ENCODE measurements at regions of chr2 and their contacts with region 1.

Region 1: DNA sequence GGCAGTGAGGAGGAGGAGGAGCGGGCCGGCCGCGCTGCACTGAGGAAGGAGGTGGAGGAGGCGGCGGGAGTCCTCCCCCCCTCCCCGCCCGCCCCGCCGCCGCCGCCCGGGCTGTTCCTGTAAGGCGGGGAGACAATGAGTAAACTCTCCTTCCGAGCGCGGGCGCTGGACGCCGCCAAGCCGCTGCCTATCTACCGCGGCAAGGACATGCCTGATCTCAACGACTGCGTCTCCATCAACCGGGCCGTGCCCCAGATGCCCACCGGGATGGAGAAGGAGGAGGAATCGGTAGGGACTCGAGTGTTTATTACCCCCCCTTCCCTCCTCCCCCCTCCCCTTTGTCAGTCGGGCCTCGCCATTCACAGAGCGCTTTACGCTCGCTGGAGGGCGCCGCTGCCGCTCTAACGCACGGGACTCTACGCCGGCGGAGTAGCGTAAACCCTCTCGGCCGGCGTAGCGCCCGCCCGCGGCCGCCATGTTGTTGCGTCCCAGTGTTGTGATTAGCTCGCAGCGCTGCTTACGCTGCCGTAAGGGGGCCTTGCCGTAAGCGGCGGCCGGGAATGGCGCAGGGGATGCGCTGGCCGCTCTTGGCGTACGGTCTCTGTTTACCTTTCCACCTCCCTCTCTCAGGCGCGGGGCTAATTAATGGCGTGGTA is 460 bp downstream of the EPC2 start:
- DNase-seq: peak; percentile 95
- ATAC-seq: peak; percentile 82
- H3K4me3 Mint-ChIP-seq: peak overlapping the region; percentile 89
- H3K27ac Mint-ChIP-seq: peak overlapping the region; percentile 99
- H3K4me1 Mint-ChIP-seq: peaks cover 46% of the 10 kb centered on the region
- H3K27me3 Mint-ChIP-seq: no peaks in the 10 kb centered on the region
- CTCF ChIP-seq: no peak

Region 2: DNA sequence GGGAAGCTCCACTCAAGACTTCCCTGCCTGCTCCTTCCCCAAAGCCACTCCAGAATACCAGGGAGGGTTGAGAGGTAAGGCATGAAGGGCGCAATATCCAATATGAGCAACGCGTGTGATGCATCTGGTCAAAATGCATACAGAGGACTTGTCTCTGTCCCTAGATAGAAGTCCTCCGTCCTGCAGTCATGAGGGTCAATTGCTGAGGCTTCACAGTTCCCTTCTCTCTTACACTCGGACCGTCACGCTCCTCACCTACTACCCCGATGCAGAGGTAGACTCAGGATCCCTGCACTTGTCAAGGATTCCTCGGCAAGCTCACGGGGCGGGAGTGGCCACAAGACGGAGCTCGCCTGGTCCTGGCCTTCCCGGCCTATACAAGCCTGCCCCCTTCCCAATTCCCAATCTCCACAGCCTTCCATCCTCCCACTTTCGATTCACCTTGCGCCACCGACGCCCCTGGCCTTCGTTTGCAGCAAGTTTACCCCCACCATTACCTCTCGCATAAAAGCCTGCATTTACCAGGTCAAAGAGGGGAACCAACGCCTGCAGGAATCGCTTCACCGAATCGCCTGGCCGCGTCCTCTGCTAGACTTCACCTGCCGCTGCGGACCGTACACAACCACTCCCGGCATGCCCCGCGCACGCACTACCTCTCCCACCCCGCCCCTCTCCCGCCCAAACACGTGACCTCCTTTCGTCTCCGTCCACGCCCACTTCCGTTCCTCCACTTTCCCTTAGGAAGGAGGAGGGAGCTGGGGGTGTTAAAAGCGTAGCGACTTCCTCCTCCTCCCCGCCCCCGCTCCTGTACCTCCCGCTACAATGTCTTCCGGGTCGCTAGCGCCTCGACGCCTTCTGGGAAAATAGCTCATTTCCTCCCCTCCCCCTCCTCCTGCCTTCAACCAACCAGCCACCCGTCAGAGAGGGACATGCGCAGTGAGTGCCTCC is 624.6 kb before region 1 on chr2 and contains the start of gene ORC4:
- CTCF ChIA-PET with region 1: interaction called, 3 read pairs
- POLR2A ChIA-PET with region 1: interaction called, 23 read pairs
- intact Hi-C with region 1: loop called (anchors 1 kb)
- DNase-seq: peak; percentile 78
- ATAC-seq: peak; percentile 89
- H3K4me3 Mint-ChIP-seq: peak within 1 kb of the TSS; percentile 100
- H3K27ac Mint-ChIP-seq: peak within 1 kb of the TSS; percentile 95
- H3K4me1 Mint-ChIP-seq: peaks cover 71% of the 10 kb centered on the region
- H3K27me3 Mint-ChIP-seq: no peaks in the 10 kb centered on the region
- CTCF ChIP-seq: no peak
- total RNA-seq, gene ORC4: 28.2 and 30.7 TPM in 2 replicates

Region 3: DNA sequence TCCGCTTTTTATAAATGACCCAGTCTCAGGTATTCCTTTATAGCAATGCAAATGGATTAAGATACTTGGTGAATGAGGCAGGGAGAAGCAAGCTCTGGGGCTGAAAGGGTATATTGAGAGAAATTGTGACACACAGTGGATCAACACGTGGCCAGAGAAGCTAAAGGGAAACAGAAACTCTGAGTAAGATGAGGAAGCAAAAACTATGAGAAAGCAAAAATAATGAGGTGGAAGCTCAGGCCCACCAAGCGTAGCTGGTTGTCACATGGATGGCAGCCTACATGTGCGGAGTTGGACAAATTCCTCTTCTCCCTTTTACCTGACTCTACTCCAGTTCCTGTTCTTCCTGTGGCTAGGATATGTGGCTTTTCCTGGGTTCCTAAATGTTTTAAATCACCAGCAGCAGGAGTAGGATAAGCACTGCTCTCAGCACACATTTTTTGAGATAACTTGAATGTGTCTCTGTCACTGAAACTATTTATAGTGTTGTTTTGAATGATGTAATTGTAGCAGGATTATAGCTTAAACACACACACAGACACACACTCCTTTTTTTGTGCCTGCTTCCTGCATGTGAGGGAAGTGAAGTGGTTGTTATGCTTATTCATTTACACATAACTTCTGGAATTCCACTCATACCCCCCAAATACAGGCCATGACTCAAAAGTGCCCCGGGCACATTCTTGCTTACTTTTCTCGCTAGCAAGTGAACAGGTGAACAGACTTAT is 30.5 kb before region 1 on chr2:
- CTCF ChIA-PET with region 1: no interaction called
- POLR2A ChIA-PET with region 1: interaction called, 8 read pairs
- intact Hi-C with region 1: loop called (anchors 1 kb)
- DNase-seq: no peak
- ATAC-seq: peak; percentile 89
- H3K4me3 Mint-ChIP-seq: peak overlapping the region; percentile 0
- H3K27ac Mint-ChIP-seq: peak overlapping the region; percentile 59
- H3K4me1 Mint-ChIP-seq: peaks cover 20% of the 10 kb centered on the region
- H3K27me3 Mint-ChIP-seq: no peaks in the 10 kb centered on the region
- CTCF ChIP-seq: no peak

Region 4: GRCh38 chr2:148674063-148675020 is 29.3 kb after region 1 on chr2:
- CTCF ChIA-PET with region 1: interaction called, 3 read pairs
- POLR2A ChIA-PET with region 1: no interaction called
- intact Hi-C with region 1: loop called (anchors 2 kb)
- DNase-seq: no peak
- ATAC-seq: peak; percentile 68
- H3K4me3 Mint-ChIP-seq: no peak overlapping the region
- H3K27ac Mint-ChIP-seq: no peak overlapping the region
- H3K4me1 Mint-ChIP-seq: peaks cover 67% of the 10 kb centered on the region
- H3K27me3 Mint-ChIP-seq: no peaks in the 10 kb centered on the region
- CTCF ChIP-seq: no peak

Region 5: GRCh38 chr2:148764815-148765214 is 119.8 kb after region 1 on chr2:
- CTCF ChIA-PET with region 1: no interaction called
- POLR2A ChIA-PET with region 1: no interaction called
- intact Hi-C with region 1: loop called (anchors 5 kb)
- DNase-seq: no peak
- ATAC-seq: no peak
- H3K4me3 Mint-ChIP-seq: no peak overlapping the region
- H3K27ac Mint-ChIP-seq: no peak overlapping the region
- H3K4me1 Mint-ChIP-seq: no peaks in the 10 kb centered on the region
- H3K27me3 Mint-ChIP-seq: no peaks in the 10 kb centered on the region
- CTCF ChIP-seq: no peak